Activated CD4-positive, alpha-beta memory T cell treated with anti-CD3 and anti-CD28 coated beads for 36 hours (primary cell): ENCODE measurements at regions of chr6 and their contacts with region 1.

Region 1: DNA sequence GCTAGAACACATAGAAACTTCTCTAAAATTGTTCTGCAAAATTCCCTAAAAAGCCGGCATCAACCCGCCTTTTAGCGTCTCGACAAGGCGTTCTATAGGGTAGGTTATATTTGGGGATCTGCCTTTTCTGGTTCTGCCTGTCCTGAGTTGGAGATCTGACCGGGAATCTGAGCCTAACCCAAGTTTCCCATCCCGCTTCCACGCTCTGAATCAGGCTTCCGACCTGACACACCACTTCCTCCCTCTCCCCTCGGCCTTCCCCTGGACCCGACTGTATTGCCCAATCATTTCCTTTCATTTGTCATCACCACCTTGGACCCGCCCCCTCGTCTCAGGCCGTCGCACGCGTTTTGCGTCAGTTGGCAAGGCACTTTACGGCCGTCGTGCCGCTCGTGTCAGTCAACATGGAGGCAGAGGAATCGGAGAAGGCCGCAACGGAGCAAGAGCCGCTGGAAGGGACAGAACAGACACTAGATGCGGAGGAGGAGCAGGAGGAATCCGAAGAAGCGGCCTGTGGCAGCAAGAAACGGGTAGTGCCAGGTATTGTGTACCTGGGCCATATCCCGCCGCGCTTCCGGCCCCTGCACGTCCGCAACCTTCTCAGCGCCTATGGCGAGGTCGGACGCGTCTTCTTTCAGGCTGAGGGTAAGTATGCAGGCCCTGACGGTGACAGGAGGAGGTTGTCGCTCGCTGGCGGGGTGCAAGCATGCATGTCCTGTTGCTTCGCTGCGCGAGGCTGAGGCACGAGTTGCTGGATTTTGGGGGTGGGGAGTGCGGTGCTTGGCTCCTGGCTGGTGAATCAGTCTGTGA is at the start of gene ABT1:
- DNase-seq: peak; percentile 98
- H3K4me3 Mint-ChIP-seq: no peak within 1 kb of the TSS
- H3K27ac Mint-ChIP-seq: no peak within 1 kb of the TSS
- H3K4me1 Mint-ChIP-seq: peaks cover 44% of the 10 kb centered on the region
- H3K27me3 Mint-ChIP-seq: peaks cover 26% of the 10 kb centered on the region
- total RNA-seq, gene ABT1: 22.6 to 22.7 TPM

Region 2: DNA sequence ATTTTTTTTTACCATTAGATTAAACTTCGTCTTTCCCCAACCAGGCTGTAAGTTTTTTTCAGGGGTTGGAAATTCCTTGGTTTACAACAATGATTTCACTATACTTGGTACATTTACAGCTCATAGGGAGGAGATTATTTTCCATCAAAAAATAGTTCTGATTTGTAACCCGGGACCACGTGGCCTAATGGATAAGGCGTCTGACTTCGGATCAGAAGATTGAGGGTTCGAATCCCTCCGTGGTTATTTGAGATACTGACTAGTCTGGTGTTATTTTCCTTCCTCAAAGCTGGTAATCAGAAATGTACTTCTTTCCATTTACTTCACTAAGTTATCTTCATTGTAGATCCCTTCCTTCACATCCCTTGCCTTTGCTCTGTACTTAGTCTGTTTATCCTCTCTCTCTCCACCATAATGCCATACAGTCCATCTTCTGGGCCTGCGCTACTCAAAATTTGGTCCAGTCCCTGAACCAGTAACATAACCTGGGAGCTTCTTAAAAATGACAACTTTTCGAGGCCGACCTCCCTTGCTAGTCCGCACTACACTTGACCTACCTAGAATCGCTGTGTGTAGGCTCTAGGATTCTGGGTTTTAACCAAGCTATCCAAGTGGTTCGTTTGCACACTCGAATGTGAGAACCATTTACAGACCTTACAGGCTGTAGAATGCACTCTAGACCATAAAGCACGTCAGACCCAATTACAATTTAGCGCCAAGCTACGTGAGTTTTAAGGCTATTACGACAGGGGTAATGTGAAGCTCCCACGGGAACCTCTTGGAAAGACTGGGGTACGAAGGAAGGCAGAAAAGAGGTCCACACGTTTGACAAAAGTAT is 273.9 kb before region 1 on chr6:
- CTCF ChIA-PET with region 1: interaction called, 15 read pairs
- POLR2A ChIA-PET with region 1: interaction called, 5 read pairs
- intact Hi-C with region 1: no loop called
- DNase-seq: peak; percentile 64
- H3K4me3 Mint-ChIP-seq: peak overlapping the region; percentile 82
- H3K27ac Mint-ChIP-seq: peak overlapping the region; percentile 80
- H3K4me1 Mint-ChIP-seq: peaks cover 21% of the 10 kb centered on the region
- H3K27me3 Mint-ChIP-seq: peaks cover 25% of the 10 kb centered on the region

Region 3: DNA sequence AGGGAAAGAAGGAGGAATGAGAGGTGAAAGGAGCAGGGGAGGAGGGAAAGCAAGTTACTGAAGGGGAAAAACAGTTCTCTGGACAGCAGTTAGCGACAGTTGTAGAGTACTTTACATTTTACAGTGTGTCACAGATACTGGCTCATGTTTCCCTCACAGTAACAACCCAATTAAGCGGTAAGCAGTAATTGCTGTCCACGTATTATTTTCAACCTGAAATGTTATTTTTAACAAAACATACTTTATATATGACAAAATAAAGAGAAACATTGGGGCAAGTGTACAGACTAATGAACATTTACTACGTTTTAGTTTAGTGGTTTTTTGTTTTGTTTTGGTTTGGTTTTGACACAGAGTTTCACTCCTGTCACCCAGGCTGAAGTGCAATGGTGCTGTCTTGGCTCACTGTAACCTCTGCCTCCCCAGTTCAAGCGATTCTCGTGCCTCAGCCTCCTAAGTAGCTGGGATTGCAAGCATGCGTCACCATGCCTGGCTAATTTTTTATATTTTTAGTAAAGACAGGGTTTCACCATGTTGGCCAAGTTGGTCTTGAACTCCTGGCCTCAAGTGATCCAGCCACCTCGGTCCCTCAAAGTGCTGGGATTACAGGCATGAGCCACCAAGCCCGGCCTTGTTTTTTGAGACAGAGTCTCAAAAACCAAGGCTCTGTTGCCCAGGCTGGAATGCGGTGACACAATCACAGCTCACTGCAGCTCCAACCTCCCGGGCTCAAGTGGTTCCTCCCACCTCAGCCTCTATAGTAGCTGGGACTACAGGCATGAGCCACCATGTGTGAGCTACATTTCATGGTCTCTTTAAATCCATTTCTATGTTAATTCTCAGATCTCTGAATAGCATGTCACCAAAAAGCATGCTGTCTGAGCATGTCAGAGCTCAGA is 254.4 kb before region 1 on chr6:
- CTCF ChIA-PET with region 1: interaction called, 34 read pairs
- POLR2A ChIA-PET with region 1: interaction called, 6 read pairs
- intact Hi-C with region 1: loop called (anchors 1 kb)
- DNase-seq: peak; percentile 65
- H3K4me3 Mint-ChIP-seq: peak overlapping the region; percentile 76
- H3K27ac Mint-ChIP-seq: peak overlapping the region; percentile 69
- H3K4me1 Mint-ChIP-seq: peaks cover 8% of the 10 kb centered on the region
- H3K27me3 Mint-ChIP-seq: peaks cover 5% of the 10 kb centered on the region

Region 4: GRCh38 chr6:26568601-26569432 is 28.0 kb before region 1 on chr6:
- CTCF ChIA-PET with region 1: interaction called, 179 read pairs
- POLR2A ChIA-PET with region 1: interaction called, 4 read pairs
- intact Hi-C with region 1: loop called (anchors 1 kb)
- DNase-seq: peak; percentile 99
- H3K4me3 Mint-ChIP-seq: peak overlapping the region; percentile 87
- H3K27ac Mint-ChIP-seq: peak overlapping the region; percentile 90
- H3K4me1 Mint-ChIP-seq: peaks cover 26% of the 10 kb centered on the region
- H3K27me3 Mint-ChIP-seq: peaks cover 4% of the 10 kb centered on the region